ENCODE measurements at regions of chr21 and their contacts with region 1.

Region 1: DNA sequence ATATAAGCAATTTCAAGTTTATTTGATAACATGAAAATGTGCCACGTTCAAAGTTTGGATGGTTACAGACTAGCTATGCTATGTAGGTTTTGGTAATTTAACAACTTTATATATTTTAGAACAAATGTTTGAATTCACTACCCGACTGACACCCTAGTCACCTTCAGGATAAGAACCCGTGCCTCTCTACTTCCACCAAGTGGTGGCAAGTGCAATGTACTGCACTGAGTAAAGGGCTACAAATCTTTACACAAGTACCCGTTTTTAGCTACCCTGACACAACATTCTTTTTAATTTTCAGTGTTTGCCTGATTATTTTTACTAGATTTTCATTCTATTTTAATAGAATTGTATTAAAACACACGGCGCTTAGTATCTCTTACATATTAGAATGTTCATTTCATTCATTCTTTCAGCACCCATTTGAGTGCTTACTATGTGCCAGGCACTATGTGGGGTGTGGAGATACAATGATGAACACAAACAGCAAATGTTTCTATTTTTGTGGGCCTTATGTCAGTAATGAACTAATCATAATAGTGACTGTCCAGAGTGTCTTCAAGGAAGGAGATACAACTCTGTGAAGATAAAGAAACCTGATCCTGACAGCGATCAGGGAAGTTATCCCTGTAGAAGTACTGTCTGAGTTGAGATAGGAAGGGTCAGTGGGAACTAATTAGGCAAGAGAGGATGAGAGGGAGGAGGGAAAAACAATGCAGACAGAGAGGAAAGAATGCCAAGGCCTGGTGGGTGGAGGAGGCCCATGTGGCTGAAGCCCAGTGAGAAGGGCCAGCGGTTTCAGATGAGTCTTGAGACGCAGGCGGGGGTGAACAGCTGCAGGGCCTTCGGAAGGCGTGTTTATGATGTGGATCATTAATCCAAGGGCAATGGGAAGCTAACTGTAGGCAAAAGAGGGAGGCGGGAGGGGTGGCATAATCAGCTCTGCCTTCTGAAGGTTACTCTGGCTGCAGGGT is 3.8 kb downstream of the LCA5L start:
- DNase-seq: peak; percentile 59
- H3K4me3 ChIP-seq: no peak overlapping the region
- H3K27ac ChIP-seq: no peak overlapping the region
- H3K4me1 ChIP-seq: peaks cover 0 to 9% of the 10 kb centered on the region in 2 experiments; a peak in 3 of 4 replicates
- H3K27me3 ChIP-seq: no peaks in the 10 kb centered on the region
- CTCF ChIP-seq: peak; percentile 79
- EP300 ChIP-seq: no peak
- RAD21 ChIP-seq: peak; percentile 78

Region 2: DNA sequence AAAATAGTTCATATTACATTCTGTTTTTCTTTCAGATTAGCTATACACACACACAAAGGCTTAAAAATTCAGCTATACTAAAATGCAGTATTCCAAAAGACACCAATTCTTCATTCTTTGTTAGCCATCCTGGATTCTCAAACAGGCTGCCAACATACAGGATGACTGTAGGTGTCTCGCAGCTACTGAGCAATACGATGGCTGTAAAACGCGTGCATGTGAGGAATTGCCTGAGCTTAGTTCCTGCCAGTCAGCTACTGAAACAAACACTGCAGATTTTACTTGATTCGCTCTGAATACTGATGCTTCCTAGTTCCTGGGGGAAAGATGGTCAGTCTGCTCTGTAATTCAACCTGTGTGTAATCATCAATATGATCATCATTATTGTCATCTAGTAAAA is 68.1 kb before region 1 on chr21:
- CTCF ChIA-PET with region 1: interaction called, 15 read pairs
- POLR2A ChIA-PET with region 1: no interaction called
- DNase-seq: peak; percentile 54
- H3K4me3 ChIP-seq: no peak overlapping the region
- H3K27ac ChIP-seq: no peak overlapping the region
- H3K4me1 ChIP-seq: no peaks in the 10 kb centered on the region
- H3K27me3 ChIP-seq: no peaks in the 10 kb centered on the region
- CTCF ChIP-seq: peak; percentile 50
- EP300 ChIP-seq: no peak
- RAD21 ChIP-seq: peak; percentile 67

Region 3: DNA sequence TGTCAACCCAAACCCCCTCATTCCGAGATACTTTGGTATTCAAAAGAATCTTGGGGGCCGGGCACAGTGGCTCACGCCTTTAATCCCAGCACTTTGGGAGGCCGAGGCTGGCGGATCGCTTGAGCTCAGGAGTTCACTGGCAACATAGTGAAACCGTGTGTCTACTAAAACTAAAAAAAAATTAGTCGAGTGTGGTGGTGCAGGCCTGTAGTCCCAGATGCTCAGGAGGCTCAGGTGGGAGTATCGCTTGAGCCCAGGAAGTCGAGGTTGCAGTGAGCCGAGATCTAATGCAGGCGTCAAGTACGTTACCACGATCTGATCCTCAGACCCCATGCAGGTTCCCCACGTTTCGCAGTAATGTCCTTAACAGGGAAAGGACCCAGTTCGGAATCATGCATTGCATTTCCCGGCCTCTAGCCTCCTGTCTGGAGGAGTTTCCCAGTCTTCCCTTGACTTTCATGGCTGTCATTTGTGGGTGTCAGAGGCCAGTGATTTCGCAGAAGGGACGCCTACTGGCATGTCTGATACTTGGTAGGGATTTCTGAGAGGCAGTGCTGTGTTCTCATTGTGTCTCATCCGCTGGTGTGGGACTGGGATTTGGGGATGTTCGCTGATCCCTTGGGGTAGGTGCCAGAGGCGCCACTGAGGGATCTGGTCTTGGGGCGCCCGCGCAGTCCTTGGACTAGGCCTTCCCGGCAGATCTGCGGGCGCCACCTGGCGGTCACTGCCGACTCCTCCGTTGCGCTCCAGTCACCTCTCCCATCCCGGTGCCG is 53.6 kb before region 1 on chr21:
- CTCF ChIA-PET with region 1: interaction called, 14 read pairs
- POLR2A ChIA-PET with region 1: interaction called, 3 read pairs
- DNase-seq: peak; percentile 92
- H3K4me3 ChIP-seq: peak overlapping the region; percentile 44 to 76
- H3K27ac ChIP-seq: peak overlapping the region; percentile 19 to 67; a peak in 3 of 4 replicates
- H3K4me1 ChIP-seq: peaks cover 4 to 17% of the 10 kb centered on the region in 2 experiments; a peak in 3 of 4 replicates
- H3K27me3 ChIP-seq: no peaks in the 10 kb centered on the region
- CTCF ChIP-seq: peak; percentile 85
- EP300 ChIP-seq: no peak
- RAD21 ChIP-seq: peak; percentile 83

Region 4: DNA sequence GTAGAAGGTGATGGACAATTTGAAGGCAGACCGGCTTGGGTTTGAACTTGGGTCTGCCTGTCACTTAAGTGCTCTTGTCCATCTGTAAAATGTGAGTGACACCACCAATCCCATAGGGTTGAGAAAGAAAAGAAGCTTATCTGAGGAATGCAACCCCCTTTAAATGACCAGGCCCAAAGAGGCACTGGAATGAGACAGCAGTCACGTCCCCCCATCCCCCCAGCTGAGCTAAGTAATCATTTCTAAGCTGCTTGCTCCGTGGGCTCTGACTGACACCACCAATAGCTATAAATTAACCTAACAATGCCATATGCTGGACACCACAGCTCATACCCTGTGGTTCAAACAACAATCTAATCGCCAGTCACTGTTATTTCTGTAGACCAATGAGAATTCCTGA is 11.3 kb before region 1 on chr21:
- CTCF ChIA-PET with region 1: interaction called, 20 read pairs
- POLR2A ChIA-PET with region 1: no interaction called
- DNase-seq: no peak
- H3K4me3 ChIP-seq: no peak overlapping the region
- H3K27ac ChIP-seq: no peak overlapping the region
- H3K4me1 ChIP-seq: no peaks in the 10 kb centered on the region
- H3K27me3 ChIP-seq: no peaks in the 10 kb centered on the region
- CTCF ChIP-seq: no peak
- EP300 ChIP-seq: no peak
- RAD21 ChIP-seq: no peak

Measured in SK-N-SH (cell line).